ENCODE measurements at regions of chr11 and their contacts with region 1.

Region 1: GRCh38 chr11:58567889-58568512 is 7.7 kb downstream of the LPXN start:
- DNase-seq: peak; percentile 78
- H3K4me3 Mint-ChIP-seq: peak overlapping the region; percentile 16
- H3K27ac Mint-ChIP-seq: peak overlapping the region; percentile 57
- H3K4me1 Mint-ChIP-seq: peaks cover 64% of the 10 kb centered on the region
- H3K27me3 Mint-ChIP-seq: no peaks in the 10 kb centered on the region

Region 2: GRCh38 chr11:58334708-58335107 is 233.3 kb before region 1 on chr11:
- CTCF ChIA-PET with region 1: no interaction called
- POLR2A ChIA-PET with region 1: no interaction called
- DNase-seq: no peak
- H3K4me3 Mint-ChIP-seq: no peak overlapping the region
- H3K27ac Mint-ChIP-seq: no peak overlapping the region
- H3K4me1 Mint-ChIP-seq: no peaks in the 10 kb centered on the region
- H3K27me3 Mint-ChIP-seq: peaks cover 2% of the 10 kb centered on the region

Region 3: DNA sequence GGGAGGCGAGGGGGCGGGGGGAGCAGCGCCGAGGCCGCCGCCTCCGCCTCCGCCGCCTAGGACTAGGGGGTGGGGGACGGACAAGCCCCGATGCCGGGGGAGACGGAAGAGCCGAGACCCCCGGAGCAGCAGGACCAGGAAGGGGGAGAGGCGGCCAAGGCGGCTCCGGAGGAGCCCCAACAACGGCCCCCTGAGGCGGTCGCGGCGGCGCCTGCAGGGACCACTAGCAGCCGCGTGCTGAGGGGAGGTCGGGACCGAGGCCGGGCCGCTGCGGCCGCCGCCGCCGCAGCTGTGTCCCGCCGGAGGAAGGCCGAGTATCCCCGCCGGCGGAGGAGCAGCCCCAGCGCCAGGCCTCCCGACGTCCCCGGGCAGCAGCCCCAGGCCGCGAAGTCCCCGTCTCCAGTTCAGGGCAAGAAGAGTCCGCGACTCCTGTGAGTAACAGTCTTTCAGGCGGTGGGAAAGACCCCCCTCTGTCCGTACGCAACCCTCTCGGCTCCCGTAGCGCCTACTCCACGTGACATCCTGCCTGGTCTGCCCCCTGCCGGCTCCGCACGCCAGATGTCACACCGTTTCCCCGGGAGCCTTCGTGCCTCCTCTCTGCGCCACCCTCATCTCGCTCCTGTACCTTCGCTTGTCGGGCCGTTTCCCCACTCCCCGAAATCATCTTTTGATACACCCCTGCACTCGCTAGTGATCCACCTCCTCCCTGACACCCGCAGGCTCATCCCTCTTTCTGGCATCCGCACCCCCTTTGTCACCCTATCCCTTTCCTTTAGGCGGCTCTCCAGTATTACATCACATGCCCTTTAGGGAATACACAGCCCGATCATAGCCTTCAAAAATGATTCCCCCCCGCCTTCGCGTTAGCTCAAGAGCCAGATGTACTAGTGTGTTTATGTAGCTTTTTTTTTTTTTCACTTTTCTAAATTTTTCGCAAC is 11.5 kb after region 1 on chr11:
- CTCF ChIA-PET with region 1: interaction called, 32 read pairs
- POLR2A ChIA-PET with region 1: no interaction called
- DNase-seq: peak; percentile 92
- H3K4me3 Mint-ChIP-seq: peak overlapping the region; percentile 93
- H3K27ac Mint-ChIP-seq: peak overlapping the region; percentile 99
- H3K4me1 Mint-ChIP-seq: peaks cover 53% of the 10 kb centered on the region
- H3K27me3 Mint-ChIP-seq: no peaks in the 10 kb centered on the region

Region 4: DNA sequence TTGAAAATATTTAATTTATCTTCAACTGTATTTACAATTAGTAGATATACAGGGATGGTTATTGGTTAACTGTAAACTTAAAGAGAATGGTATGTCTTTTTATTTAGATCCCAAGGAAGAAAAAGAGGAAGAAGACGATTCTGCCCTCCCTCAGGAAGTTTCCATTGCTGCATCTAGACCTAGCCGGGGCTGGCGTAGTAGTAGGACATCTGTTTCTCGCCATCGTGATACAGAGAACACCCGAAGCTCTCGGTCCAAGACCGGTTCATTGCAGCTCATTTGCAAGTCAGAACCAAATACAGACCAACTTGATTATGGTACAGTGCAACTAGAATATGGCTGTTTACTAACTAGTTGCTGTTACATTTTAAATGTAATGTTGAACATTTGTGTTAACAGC is 41.7 kb after region 1 on chr11:
- CTCF ChIA-PET with region 1: no interaction called
- POLR2A ChIA-PET with region 1: no interaction called
- DNase-seq: no peak
- H3K4me3 Mint-ChIP-seq: no peak overlapping the region
- H3K27ac Mint-ChIP-seq: no peak overlapping the region
- H3K4me1 Mint-ChIP-seq: peaks cover 43% of the 10 kb centered on the region
- H3K27me3 Mint-ChIP-seq: no peaks in the 10 kb centered on the region

Measured in activated CD4-positive, alpha-beta T cell treated with anti-CD3 and anti-CD28 coated beads, Interleukin-2, amount 10 ng/mL, durations not matched to agents 7 days and 5 days (primary cell).